ENCODE measurements at regions of chr14 and their contacts with region 1.

Region 1: GRCh38 chr14:21723431-21724045 is 49.9 kb upstream of the OR4E1 start:
- DNase-seq: peak; percentile 81

Region 2: DNA sequence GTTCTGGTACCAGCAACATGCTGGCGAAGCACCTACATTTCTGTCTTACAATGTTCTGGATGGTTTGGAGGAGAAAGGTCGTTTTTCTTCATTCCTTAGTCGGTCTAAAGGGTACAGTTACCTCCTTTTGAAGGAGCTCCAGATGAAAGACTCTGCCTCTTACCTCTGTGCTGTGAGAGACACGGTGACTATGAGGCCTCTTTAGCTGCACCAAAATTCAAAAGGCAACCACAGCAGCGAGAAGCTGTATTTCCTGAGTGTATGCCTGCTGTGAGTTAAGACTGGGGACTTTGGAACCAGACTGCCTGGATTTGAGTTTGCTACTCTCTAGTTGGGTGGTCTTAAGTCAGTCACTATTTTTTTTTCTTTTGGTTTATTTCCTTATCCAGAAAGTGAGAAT is 80.1 kb before region 1 on chr14:
- CTCF ChIA-PET with region 1: no interaction called
- POLR2A ChIA-PET with region 1: no interaction called
- DNase-seq: no peak

Region 3: DNA sequence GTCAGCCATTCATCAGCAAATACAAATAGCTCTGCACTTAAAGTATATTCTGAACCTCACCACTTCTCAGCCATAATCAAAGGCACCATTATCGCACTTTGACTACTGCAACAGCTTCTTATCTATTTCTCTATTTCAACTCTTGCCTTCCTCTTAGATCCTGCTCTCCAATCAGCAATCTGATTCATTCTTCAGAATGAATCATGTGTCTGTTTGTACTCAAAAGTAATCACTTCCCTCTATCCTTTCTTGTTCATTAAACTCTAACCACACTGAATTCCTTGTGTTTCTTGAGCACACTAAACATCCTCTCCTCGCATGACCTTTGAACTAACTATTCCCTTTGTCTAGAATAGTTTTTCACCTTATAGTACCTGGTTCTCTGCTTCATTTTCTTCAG is 37.1 kb before region 1 on chr14:
- CTCF ChIA-PET with region 1: no interaction called
- POLR2A ChIA-PET with region 1: no interaction called
- DNase-seq: no peak

Region 4: GRCh38 chr14:21711360-21711961 is 12.1 kb before region 1 on chr14:
- CTCF ChIA-PET with region 1: interaction called, 27 read pairs
- POLR2A ChIA-PET with region 1: no interaction called
- DNase-seq: peak; percentile 33

Region 5: DNA sequence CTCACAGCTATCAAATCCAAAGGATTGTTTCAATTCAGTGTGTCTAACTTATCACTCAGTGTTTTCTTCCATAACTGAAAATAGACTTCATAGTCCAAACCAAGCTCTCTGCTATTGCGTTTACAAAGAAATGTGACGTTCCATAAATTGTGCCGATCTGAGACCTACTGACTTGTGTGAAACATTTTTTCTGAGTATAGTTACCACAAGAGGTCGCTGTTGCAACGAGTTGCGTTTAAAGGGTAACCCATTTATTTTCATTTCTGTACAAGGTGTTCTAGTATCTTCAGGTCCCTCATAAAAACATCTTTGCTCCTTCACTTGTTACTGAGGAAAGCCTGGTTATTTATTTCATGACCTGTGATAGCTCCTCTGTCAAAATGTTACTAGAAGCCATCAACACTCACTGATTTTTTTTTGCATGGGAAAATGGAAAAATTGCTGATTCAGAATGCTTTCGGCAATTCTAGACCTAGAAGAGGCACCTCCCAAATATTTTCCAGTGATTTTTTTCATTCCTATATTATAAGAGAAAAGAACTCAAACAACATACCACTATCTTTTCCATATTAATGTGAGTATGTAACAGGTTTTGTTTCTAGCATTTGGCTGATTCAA is 11.0 kb after region 1 on chr14:
- CTCF ChIA-PET with region 1: interaction called, 13 read pairs
- POLR2A ChIA-PET with region 1: no interaction called
- DNase-seq: peak; percentile 48

Region 6: GRCh38 chr14:21768116-21768874 is 44.8 kb after region 1 on chr14:
- CTCF ChIA-PET with region 1: interaction called, 14 read pairs
- POLR2A ChIA-PET with region 1: no interaction called
- DNase-seq: peak; percentile 65

Region 7: DNA sequence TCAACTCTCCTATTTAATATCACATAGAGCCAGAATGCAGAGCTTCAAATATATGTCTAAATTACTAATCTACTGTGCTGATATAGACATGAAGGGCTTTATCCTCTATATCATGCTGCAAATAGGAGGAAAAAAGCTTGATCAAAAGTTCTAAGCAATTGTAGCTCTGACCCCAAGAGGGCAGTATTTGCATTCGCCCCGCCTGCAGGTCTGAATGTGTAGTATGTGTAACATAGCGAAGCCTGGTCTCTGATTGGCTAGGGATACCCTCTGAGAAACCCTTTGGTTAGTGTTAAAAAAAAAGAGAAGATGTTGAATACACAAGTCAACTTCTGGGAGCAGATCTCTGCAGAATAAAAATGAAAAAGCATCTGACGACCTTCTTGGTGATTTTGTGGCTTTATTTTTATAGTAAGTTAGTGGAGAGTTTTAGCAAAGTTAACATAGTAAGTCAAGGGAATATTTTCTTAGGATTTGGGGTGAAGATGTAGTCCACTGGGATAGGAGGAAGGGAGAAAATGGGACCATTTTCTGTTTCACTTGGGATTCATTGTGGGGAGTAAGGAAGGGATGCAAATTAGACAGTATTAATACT is 101.7 kb after region 1 on chr14:
- CTCF ChIA-PET with region 1: no interaction called
- POLR2A ChIA-PET with region 1: no interaction called
- DNase-seq: peak; percentile 59

Region 8: GRCh38 chr14:22418631-22419030 is 695.1 kb after region 1 on chr14:
- CTCF ChIA-PET with region 1: no interaction called
- POLR2A ChIA-PET with region 1: no interaction called
- DNase-seq: no peak

Measured in HEK293T (cell line).